ENCODE measurements at regions of chr3 and their contacts with region 1.

Region 1: DNA sequence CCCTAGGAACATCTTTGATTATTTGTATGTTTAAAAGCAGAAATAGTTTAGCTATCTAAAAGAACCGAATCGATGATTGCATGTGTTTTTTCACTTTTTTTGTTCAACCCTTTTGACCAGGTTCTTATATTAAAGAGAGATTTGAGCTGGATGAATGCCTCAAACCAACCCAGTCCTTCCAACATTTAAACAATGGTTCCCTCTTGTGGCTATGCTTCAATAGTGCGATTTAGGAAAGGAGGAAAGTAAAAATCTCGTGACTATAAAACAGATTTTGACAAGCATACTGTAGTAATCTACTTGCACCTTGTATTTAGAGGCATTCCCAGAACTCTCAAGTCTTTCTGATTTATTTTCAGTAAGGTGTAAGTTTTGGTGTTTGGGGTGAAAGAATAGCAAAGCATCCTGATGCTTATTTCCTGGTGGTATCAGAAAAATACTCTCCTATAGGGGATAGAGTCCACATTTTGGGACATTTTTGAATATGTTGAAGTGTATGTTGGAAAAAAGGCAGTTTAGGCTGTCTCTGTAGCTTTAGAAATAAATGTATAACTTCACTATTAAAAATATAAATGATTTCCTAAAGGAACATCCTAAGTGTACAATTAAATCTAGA is 159.6 kb upstream of the KCNH8 start:
- DNase-seq: peak; percentile 34 to 72 (median 68)
- H3K4me3 ChIP-seq: no peak overlapping the region
- H3K27ac ChIP-seq: no peak overlapping the region
- H3K4me1 ChIP-seq: no peaks in the 10 kb centered on the region
- H3K27me3 ChIP-seq: no peaks in the 10 kb centered on the region

Region 2: DNA sequence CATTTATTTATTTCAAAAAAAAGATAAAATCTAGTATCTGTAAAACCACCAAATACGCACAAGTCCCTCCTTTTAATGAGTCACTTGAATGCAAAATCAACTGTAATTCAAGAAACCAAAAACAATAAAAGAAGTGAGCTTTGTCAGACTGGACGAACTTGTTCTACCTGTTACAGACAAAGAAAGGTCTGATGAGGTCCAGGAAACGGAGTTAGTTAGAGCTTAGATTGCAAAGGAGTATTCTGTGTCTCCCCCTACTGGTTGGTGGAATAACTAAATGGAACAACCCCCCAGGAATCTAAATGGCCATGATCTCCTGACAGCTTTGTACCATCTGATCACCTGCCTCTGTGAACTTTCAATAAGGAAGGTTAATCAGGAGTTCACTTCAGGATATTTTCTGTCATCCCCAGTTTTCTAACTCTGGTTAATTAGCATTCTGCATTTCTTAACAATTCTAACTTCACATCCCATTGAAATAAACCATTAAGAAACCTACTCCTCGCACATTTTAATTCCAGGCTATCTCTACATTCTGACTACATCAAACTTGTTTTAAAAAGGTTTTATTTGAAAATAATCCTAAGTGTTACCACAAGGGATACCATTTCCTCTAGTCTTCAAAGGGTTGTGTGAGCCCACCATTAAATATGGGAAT is 230.5 kb before region 1 on chr3:
- CTCF ChIA-PET with region 1: interaction called, 12 read pairs
- POLR2A ChIA-PET with region 1: no interaction called
- DNase-seq: peak; percentile 82 to 89 (median 84)
- H3K4me3 ChIP-seq: no peak overlapping the region
- H3K27ac ChIP-seq: no peak overlapping the region
- H3K4me1 ChIP-seq: peaks cover 0 to 3% (median 0%) of the 10 kb centered on the region in 4 experiments
- H3K27me3 ChIP-seq: no peaks in the 10 kb centered on the region

Region 3: GRCh38 chr3:18847583-18848197 is 141.0 kb before region 1 on chr3:
- CTCF ChIA-PET with region 1: interaction called, 29 read pairs
- POLR2A ChIA-PET with region 1: no interaction called
- DNase-seq: peak; percentile 30 to 36 (median 35)
- H3K4me3 ChIP-seq: no peak overlapping the region
- H3K27ac ChIP-seq: no peak overlapping the region
- H3K4me1 ChIP-seq: no peaks in the 10 kb centered on the region
- H3K27me3 ChIP-seq: no peaks in the 10 kb centered on the region

Measured in common myeloid progenitor, CD34-positive (primary cell).